MCF 10A (cell line): ENCODE measurements at regions of chr12 and their contacts with region 1.

Region 1: DNA sequence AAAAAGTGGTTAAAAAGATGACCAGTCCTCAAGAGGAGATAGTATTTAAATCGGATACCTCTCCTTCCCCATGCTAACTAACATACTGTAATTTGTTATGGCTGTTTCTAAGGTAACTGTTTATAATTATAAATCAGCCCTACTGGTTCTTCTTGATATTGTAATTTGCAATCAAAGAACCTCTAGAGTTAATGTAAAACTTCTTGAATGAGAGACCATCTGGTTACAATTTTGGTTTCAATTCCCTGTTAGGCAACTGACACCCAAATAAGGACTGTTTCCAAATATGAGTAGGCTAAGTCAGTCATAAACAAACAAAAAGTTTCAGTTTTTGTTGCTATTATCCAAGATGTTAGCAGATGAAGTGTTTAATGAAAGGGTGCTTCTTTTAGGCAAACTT is 120.2 kb upstream of the DNM1L start:
- DNase-seq: no peak
- H3K4me3 Mint-ChIP-seq: no peak overlapping the region
- H3K27ac Mint-ChIP-seq: peak overlapping the region; percentile 2
- H3K4me1 Mint-ChIP-seq: peaks cover 18% of the 10 kb centered on the region
- H3K27me3 Mint-ChIP-seq: no peaks in the 10 kb centered on the region
- CTCF ChIP-seq: no peak

Region 2: DNA sequence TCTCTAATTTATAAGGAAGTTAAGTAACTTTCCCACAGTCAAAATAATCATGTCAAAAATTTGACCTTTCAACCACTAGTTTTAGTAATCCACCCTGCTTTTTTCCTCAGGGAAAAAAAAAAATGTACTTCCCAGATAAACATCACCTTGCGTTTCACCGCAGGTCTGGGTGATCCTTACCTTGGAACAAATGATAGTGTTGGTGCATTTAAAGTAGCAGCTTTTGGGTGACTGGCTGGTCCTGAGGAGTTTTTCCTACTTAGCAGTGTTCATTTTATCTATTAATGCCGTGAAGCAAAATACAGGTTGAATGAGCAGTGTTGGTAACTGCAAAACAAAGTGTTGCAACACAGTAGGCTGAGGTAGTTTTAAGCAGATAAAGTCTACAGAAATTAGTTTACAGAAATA is 17.0 kb before region 1 on chr12:
- CTCF ChIA-PET with region 1: interaction called, 11 read pairs
- POLR2A ChIA-PET with region 1: interaction called, 3 read pairs
- intact Hi-C with region 1: no loop called
- DNase-seq: peak; percentile 26
- H3K4me3 Mint-ChIP-seq: no peak overlapping the region
- H3K27ac Mint-ChIP-seq: peak overlapping the region; percentile 12
- H3K4me1 Mint-ChIP-seq: peaks cover 44% of the 10 kb centered on the region
- H3K27me3 Mint-ChIP-seq: no peaks in the 10 kb centered on the region
- CTCF ChIP-seq: no peak